AG04449 (cell line): ENCODE measurements at regions of chr2 and their contacts with region 1.

Region 1: GRCh38 chr2:201860636-201861066 is 54.3 kb downstream of the CDK15 start:
- DNase-seq: peak; percentile 54
- H3K4me3 ChIP-seq: no peak overlapping the region
- CTCF ChIP-seq: peak; percentile 83

Region 2: DNA sequence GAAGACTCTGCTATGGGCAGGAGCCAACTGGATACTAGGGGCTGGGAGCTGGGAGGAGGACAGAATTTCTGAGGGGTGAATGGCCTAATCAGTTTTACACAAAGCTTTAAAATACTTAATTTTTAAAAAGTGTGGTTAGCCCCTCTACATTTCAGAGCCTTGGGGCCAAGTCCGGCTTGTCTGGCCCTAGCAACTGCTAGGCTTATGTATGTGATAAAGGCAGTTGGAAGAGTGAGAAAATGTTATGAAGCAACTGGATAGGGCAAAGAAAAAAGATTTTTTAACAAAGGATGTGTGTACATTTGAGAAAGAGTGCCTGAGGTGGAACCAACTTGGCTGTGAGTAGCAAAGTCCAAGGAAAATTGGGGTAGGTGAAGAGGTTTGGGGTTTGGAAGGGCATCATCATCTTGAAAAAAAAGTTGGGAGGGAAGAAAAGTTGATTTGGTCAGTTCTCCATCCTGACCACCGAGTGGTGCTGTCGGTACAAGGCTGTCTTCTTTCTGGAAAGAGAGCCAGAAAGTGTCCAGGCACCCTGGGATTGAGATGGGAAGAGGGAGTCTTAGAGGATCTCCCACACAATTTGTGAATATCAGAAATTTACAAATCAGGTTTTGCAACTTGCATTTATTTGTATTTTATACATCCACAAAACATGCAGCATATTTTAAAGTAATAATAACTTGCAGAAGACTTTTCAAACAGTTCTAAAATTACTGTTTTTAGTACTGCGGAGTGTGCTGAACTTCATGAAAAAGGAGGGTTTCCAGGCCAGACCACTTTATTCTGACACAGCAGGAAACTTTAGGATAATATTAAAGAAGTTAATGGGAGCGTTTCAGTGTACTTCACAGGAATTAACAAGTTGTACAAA is 64.8 kb before region 1 on chr2:
- CTCF ChIA-PET with region 1: interaction called, 32 read pairs
- POLR2A ChIA-PET with region 1: no interaction called
- DNase-seq: no peak
- H3K4me3 ChIP-seq: no peak overlapping the region
- CTCF ChIP-seq: peak; percentile 81

Region 3: DNA sequence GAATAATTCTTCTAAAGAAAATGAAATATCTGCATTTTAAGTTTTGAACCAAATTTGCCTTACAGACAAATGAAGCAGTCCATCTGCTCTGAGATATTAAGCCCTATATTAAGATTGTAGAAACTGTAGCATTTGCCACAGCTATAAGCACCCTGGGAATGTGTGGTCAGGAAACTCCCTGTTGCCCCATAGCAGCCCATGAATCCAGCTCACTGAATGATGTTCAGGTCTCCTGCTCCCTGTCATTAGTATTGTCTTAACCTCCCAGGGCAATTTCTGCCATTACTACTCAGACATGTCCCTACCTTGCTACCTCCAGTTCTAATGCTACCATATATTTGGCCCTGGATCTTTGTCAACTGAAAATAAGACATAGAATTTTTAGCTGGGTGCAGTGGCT is 13.2 kb before region 1 on chr2:
- CTCF ChIA-PET with region 1: interaction called, 16 read pairs
- POLR2A ChIA-PET with region 1: interaction called, 4 read pairs
- DNase-seq: peak; percentile 59
- H3K4me3 ChIP-seq: no peak overlapping the region
- CTCF ChIP-seq: no peak

Region 4: DNA sequence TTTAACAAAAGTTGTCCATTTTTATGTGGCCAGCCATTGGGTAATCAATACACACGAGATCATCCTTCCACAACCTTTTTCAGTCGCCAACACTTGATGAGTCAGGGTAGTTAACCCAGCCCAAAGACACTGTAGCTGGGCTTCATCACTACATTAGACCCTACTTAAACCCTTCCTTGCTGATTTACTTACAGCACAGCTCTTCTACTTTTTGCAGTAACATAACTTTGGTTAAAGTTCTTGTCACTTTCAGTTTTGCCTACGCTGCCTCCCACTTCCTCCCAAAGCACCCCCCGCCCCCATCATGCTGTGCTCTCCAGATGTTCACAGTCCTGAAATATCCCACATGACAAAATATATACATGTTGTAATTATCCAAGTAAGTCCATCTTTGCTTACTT is 49.3 kb after region 1 on chr2:
- CTCF ChIA-PET with region 1: interaction called, 16 read pairs
- POLR2A ChIA-PET with region 1: no interaction called
- DNase-seq: no peak
- H3K4me3 ChIP-seq: peak overlapping the region; percentile 50
- CTCF ChIP-seq: no peak

Region 5: DNA sequence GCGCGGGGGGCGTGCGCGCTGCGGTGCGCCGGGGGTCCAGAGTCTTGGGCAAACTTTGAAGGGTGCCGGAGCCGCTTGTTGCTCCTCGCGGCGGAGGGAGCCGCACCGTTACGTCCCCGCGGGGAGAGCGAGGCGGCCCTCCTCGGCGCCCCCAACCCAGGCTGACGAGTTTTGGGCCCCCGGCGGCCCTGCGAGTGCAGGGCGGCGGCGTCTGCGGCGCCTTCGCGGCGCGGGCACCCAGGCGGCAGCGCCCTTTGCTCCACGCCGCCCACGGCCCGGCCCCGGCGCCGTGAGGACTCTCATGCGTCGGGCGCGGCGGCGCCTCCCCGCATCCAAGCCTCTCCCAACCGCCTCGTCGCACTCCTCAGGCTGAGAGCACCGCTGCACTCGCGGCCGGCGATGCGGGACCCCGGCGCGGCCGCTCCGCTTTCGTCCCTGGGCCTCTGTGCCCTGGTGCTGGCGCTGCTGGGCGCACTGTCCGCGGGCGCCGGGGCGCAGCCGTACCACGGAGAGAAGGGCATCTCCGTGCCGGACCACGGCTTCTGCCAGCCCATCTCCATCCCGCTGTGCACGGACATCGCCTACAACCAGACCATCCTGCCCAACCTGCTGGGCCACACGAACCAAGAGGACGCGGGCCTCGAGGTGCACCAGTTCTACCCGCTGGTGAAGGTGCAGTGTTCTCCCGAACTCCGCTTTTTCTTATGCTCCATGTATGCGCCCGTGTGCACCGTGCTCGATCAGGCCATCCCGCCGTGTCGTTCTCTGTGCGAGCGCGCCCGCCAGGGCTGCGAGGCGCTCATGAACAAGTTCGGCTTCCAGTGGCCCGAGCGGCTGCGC is 173.8 kb after region 1 on chr2:
- CTCF ChIA-PET with region 1: interaction called, 35 read pairs
- POLR2A ChIA-PET with region 1: interaction called, 9 read pairs
- DNase-seq: no peak
- H3K4me3 ChIP-seq: peak overlapping the region; percentile 91
- CTCF ChIP-seq: no peak

Region 6: DNA sequence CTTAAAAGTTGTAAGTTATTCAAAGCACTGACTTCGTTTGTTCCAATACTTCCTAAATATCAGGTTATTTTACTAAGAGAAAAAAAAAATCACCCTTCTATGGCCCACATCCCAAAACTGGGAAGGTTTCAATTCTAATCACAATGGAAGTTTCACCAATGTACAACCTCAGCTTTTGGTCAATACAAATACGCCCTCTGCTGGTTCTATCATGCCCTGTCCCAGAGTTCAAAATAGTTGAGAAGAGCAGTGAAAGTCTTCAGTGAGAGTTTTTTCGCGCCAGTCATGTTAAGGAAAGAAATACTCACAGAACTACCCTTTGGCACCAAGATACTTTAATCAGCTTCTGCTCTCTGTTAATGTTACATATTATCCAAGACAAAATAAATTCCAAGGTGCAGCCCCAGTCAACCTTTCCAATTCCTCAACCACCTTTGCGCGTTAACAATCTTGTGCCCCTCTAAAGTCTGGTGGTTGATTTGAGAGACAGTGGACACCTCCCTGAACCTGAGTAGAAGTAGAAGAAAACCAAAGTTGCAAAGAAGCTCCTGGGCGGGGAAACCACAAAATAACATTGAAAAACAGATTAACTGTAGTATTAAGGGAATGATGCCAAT is 317.8 kb after region 1 on chr2:
- CTCF ChIA-PET with region 1: interaction called, 46 read pairs
- POLR2A ChIA-PET with region 1: no interaction called
- DNase-seq: no peak
- H3K4me3 ChIP-seq: no peak overlapping the region
- CTCF ChIP-seq: peak; percentile 65